ENCODE measurements at regions of chr1 and their contacts with region 1.

Region 1: GRCh38 chr1:150268705-150269403 is at the start of gene APH1A:
- DNase-seq: peak; percentile 96
- CTCF ChIP-seq: no peak

Region 2: DNA sequence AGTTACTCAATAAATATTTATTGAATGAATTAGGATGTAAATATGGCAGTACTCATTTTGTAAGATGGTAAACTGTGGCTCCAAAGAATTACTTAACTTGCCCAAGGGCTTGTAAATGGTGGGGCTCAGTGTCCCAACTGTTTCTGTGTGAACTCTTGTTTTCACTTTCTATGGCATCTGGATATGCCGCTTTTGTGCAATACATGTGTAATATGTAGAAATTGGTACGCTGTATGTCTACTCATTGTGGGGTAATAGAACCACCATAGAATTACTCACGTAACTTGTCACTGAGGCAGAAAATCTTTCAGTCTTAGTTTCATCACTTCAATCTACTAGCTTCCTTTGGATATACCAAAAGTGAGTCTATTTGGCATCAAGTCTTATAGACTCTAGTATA is 53.5 kb after region 1 on chr1:
- in situ Hi-C with region 1: no loop called
- DNase-seq: peak; percentile 20
- CTCF ChIP-seq: no peak

Region 3: DNA sequence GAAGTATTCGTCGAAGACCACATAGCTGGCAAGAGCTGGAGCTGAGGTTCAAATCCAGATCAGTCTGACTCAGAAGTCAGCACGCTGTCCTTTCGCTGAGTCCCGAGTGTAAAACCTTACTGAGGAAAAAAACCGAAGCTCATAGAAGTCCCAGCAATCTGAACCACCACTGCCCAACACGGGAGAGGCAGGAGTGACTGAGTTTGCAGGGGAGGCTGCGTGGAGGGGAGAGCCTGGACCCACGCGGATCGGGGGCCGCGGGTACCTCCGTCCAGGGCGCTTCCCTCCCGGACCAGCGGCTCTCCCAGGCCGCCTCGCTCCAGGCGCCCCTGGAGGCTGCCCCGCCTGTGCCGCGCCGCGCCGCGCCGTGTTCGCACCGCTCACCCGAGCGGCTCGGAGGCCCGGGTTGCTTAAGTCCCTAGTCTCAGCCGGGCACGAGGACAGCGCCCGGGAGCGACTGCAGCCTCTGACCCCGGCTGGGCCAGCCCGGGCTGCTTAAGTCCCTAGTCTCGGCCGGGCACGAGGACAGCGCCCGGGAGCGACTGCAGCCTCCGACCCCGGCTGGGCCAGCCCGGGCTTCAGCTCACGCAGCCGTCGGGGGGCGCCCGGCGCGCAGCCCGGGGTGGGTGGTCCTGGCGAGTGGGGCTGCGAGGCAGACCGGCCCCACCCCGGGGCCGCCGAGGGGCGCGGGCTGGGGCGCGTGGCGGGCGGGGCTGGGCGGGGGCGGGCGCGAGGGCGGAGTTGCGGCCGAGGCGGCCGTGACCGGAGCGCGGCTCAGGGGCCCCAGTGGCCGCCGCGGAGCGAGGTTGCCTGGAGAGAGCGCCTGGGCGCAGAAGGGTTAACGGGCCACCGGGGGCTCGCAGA is 280.0 kb after region 1 on chr1 and contains the start of gene ADAMTSL4:
- in situ Hi-C with region 1: loop called (anchors 25 kb)
- DNase-seq: peak; percentile 83
- CTCF ChIP-seq: peak; percentile 18

Measured in GM13977 (cell line).